ENCODE measurements at regions of chr5 and their contacts with region 1.

Region 1: DNA sequence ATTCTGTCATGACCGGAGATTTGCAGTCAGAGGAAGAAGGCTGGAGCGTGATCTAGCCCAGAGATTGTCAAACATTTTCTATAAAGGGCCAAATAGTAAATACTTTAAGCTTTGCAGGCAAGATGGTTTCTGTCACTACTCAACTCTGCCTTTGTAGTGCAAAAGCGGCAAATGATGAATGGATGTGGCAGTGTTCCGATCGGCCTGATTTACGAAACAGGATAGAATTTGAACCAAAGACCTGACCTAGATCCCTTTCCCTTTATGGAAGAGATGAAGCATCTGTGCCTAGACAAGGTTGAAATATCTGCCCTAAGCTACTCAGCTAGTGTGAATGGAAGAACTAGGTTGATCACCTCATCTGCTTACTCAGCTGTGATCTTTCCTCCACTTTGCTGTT is 209.5 kb downstream of the YTHDC2 start:
- DNase-seq: no peak
- ATAC-seq: no peak
- H3K4me3 ChIP-seq: no peak overlapping the region
- H3K4me3 Mint-ChIP-seq: no peak overlapping the region
- H3K27ac ChIP-seq: no peak overlapping the region
- H3K27ac Mint-ChIP-seq: no peak overlapping the region
- H3K4me1 ChIP-seq: no peaks in the 10 kb centered on the region
- H3K4me1 Mint-ChIP-seq: no peaks in the 10 kb centered on the region
- H3K27me3 ChIP-seq: no peaks in the 10 kb centered on the region
- H3K27me3 Mint-ChIP-seq: peaks cover 0 to 4% of the 10 kb centered on the region in 2 donors

Region 2: DNA sequence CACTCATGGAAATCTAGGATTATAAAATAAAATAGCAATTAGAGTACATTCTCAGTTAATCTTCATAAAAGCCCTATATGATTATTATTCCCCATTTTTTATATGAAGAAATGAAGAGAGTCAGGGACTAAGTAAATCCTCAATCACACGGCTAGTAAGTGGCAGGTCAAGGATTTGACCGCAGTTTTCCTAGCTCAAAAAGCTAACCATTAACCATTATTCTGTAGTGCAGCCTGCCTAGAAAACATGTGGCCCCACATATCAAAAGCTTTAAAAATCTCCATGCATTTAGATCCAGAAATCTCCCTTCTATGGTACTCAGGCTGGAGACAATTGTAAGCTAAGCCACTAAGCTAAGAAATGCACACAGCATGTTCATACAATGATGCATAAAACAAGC is 1325.3 kb before region 1 on chr5:
- CTCF ChIA-PET with region 1: no interaction called
- POLR2A ChIA-PET with region 1: no interaction called
- DNase-seq: no peak
- ATAC-seq: no peak
- H3K4me3 ChIP-seq: no peak overlapping the region
- H3K4me3 Mint-ChIP-seq: no peak overlapping the region
- H3K27ac ChIP-seq: no peak overlapping the region
- H3K27ac Mint-ChIP-seq: no peak overlapping the region
- H3K4me1 ChIP-seq: no peaks in the 10 kb centered on the region
- H3K4me1 Mint-ChIP-seq: no peaks in the 10 kb centered on the region
- H3K27me3 ChIP-seq: peaks cover 0 to 4% of the 10 kb centered on the region in 2 experiments
- H3K27me3 Mint-ChIP-seq: peaks cover 10 to 22% of the 10 kb centered on the region in 2 donors

Region 3: GRCh38 chr5:115381911-115382662 is 1659.1 kb after region 1 on chr5:
- CTCF ChIA-PET with region 1: no interaction called
- POLR2A ChIA-PET with region 1: interaction called in 1 of 2 experiments, 17 read pairs
- DNase-seq: no peak
- ATAC-seq: no peak
- H3K4me3 ChIP-seq: no peak overlapping the region
- H3K4me3 Mint-ChIP-seq: no peak overlapping the region
- H3K27ac ChIP-seq: no peak overlapping the region
- H3K27ac Mint-ChIP-seq: no peak overlapping the region
- H3K4me1 ChIP-seq: no peaks in the 10 kb centered on the region
- H3K4me1 Mint-ChIP-seq: peaks cover 0 to 11% (median 3%) of the 10 kb centered on the region in 3 donors
- H3K27me3 ChIP-seq: no peaks in the 10 kb centered on the region
- H3K27me3 Mint-ChIP-seq: peaks cover 0 to under 1% of the 10 kb centered on the region in 2 donors